Ascending aorta (tissue), 2 donors: ENCODE measurements at regions of chr1 and their contacts with region 1.

Region 1: DNA sequence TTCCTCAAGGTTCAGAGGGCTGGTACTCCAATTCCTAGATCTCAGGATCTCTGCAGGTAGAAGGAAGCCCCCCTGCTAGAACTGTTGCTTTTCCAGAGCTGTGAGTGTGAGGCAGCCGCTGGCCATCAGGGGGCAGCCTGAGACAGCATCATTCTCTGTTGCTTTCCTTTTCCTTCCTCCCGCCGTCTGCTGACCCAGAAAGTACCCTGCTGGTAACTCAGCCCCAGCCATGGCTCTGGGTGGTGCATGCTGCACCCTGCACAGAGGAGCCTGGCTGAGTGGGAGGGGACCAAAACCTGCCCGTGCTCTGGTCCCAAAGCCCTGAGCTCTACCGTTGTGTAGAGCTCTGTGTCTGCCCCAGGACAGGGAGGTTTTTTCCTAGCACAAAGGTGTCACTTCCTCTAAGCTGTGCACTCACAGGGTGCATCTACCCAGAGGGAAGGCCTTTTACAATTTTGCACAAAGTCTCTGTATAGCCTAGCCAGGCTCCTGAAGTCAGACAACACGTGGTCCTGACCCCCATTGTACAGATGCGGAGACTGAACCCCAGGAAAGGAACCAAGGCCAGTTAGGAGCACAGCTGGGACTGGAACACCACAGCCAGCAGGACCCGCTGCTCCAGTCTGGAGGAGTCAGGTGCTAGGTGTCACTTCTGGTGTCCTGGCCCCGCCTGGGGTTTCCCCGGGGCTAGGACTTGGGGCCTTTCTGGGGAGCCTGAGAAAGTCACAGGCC is 5.6 kb upstream of the FAM131C start:
- DNase-seq: peak in 1 of 2 donors; percentile 90
- H3K4me3 ChIP-seq: no peak overlapping the region
- H3K27ac ChIP-seq: peak overlapping the region in 1 of 2 donors; percentile 19
- H3K4me1 ChIP-seq: peaks cover 8 to 15% of the 10 kb centered on the region in 2 donors
- H3K27me3 ChIP-seq: no peaks in the 10 kb centered on the region
- CTCF ChIP-seq: peak; percentile 88 to 97 (median 92)

Region 2: GRCh38 chr1:16187748-16188401 is 108.8 kb after region 1 on chr1:
- intact Hi-C with region 1: loop called (anchors 1 kb)
- DNase-seq: peak in 1 of 2 donors; percentile 89
- H3K4me3 ChIP-seq: no peak overlapping the region
- H3K27ac ChIP-seq: no peak overlapping the region
- H3K4me1 ChIP-seq: peaks cover 6 to 20% of the 10 kb centered on the region in 2 donors
- H3K27me3 ChIP-seq: no peaks in the 10 kb centered on the region
- CTCF ChIP-seq: peak; percentile 90 to 99 (median 98)